ENCODE measurements at regions of chr2 and their contacts with region 1.

Region 1: DNA sequence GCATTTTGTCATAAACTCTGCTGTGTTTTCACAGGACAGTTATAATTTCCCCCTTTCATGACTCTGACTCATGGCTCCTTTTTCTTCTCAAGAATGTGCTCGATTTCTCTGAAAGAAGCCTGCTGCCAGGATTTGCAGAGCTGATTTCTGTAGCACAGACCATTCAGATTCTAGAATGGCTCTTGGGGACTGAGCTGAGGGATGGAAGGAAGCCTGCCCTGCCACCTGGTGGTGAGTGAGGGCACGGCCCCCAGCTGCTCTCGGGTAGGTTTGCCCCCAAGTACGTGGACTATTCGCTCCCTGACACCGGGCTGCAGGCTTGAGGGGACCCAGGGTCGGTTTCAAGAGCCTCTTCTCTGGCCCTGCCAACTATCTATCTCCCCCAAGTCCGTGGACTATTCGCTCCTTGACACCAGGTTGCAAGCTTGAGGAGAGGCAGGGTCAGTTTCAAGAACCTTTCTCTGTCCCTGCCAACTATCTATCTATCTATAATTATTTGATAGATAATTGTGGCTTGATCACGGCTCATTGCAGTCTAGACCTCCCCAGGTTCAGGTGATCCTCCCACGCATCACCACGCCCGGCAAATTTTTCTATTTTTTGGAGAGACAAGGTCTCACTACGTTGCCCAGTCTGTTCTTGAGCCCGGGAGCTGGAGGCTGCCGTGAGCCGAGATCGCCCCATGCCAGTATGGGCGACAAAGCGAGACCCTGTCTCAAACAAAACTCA is 1.4 kb upstream of the SMYD5 start:
- DNase-seq: peak; percentile 64
- H3K4me3 Mint-ChIP-seq: no peak overlapping the region
- H3K27ac Mint-ChIP-seq: no peak overlapping the region
- H3K4me1 Mint-ChIP-seq: peaks cover 26% of the 10 kb centered on the region
- H3K27me3 Mint-ChIP-seq: peaks cover 17% of the 10 kb centered on the region

Region 2: DNA sequence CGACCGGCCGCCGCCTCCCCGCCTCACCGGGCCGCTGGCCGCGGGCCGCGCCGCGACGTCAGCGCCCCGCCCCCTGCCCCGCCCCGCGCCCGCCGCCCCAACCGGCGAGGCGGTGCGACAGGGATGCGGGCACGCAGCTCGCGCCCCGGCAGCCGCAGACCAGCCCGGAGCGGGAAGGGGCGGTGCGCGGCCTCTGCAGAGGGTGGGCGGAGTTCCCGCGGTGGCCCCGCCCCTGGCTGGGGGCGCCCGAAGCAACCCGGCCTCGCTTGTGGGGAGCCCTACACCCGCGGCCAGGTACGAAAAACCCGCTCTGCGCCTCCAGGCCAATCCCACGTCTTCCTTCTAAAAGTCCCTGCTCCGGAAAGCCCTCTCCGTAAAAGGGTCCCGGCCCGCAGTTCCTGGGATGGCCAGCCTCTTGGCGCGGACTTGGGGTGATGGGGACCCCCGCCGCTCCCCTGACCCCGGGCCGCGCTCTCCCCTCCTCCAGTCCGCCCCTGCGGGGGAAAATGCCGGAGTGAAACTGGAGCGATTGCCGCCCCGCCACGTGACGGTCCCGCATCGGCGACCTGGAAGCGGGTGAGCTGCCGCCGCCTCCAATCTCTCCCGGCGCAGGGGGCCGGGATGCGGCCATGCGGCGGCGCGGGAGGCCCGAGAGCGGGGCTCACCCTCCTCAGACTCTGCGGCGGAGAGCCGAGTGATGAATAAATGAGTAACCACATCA is 99.5 kb before region 1 on chr2 and contains the start of gene RAB11FIP5:
- intact Hi-C with region 1: loop called (anchors 1 kb)
- DNase-seq: peak; percentile 73
- H3K4me3 Mint-ChIP-seq: peak within 1 kb of the TSS; percentile 83
- H3K27ac Mint-ChIP-seq: peak within 1 kb of the TSS; percentile 46
- H3K4me1 Mint-ChIP-seq: peaks cover 21% of the 10 kb centered on the region
- H3K27me3 Mint-ChIP-seq: peaks cover 20% of the 10 kb centered on the region
- total RNA-seq, gene RAB11FIP5: 10.7 and 11.7 TPM in 2 replicates

Region 3: GRCh38 chr2:73293534-73294171 is 81.0 kb after region 1 on chr2 and contains the start of gene EGR4:
- intact Hi-C with region 1: loop called (anchors 5 kb)
- DNase-seq: peak; percentile 87
- H3K4me3 Mint-ChIP-seq: peak within 1 kb of the TSS; percentile 69
- H3K27ac Mint-ChIP-seq: no peak within 1 kb of the TSS
- H3K4me1 Mint-ChIP-seq: peaks cover 5% of the 10 kb centered on the region
- H3K27me3 Mint-ChIP-seq: peaks cover 67% of the 10 kb centered on the region
- total RNA-seq, gene EGR4: 0.46 and 0.53 TPM in 2 replicates

Region 4: GRCh38 chr2:73385595-73386341 is 173.2 kb after region 1 on chr2 and contains the start of gene ALMS1:
- intact Hi-C with region 1: loop called (anchors 1 kb)
- DNase-seq: peak; percentile 89
- H3K4me3 Mint-ChIP-seq: peak within 1 kb of the TSS; percentile 89
- H3K27ac Mint-ChIP-seq: peak within 1 kb of the TSS; percentile 90
- H3K4me1 Mint-ChIP-seq: peaks cover 27% of the 10 kb centered on the region
- H3K27me3 Mint-ChIP-seq: peaks cover 9% of the 10 kb centered on the region
- total RNA-seq, gene ALMS1: 19.0 and 21.6 TPM in 2 replicates

Region 5: DNA sequence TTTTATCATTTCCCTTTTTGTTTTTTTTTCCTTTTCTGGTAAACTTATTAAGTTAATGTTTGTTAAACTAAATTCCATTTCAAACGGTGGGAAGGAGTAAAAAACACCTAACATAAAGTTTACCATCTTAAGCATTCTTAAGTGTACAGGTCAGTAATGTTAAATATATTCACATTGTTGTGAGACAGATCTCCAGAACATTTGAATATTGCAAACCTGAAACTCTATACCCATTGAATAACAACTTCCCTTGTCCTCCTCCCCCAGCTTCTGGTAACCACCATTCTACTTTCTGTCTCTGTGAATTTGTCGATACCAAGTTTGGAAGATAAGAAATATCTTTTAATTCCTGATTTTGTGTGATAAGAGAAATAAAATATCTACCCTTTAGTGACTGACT is 441.6 kb after region 1 on chr2:
- intact Hi-C with region 1: no loop called
- DNase-seq: no peak
- H3K4me3 Mint-ChIP-seq: no peak overlapping the region
- H3K27ac Mint-ChIP-seq: no peak overlapping the region
- H3K4me1 Mint-ChIP-seq: no peaks in the 10 kb centered on the region
- H3K27me3 Mint-ChIP-seq: peaks cover 2% of the 10 kb centered on the region

Measured in activated T-helper 2 cell treated with anti-CD3 and anti-CD28 coated beads, Interferon-gamma antibody, Interleukin-2, Interleukin-4, amounts not matched to agents 10 μg/mL and 5 μg/mL and 100 μg/mL, durations not matched to agents 14 hours and 24 hours and 36 hours (primary cell).